Activated CD8-positive, alpha-beta T cell treated with anti-CD3 and anti-CD28 coated beads, Interleukin-2, amount 10 ng/mL, durations not matched to agents 7 days and 5 days (primary cell): ENCODE measurements at regions of chr1 and their contacts with region 1.

Region 1: GRCh38 chr1:40951943-40952743 is 27.4 kb upstream of the CTPS1 start:
- DNase-seq: peak; percentile 68
- ATAC-seq: peak; percentile 85
- H3K4me3 Mint-ChIP-seq: no peak overlapping the region
- H3K27ac Mint-ChIP-seq: peak overlapping the region; percentile 55
- H3K4me1 Mint-ChIP-seq: peaks cover 27% of the 10 kb centered on the region
- H3K27me3 Mint-ChIP-seq: peaks cover 31% of the 10 kb centered on the region

Region 2: DNA sequence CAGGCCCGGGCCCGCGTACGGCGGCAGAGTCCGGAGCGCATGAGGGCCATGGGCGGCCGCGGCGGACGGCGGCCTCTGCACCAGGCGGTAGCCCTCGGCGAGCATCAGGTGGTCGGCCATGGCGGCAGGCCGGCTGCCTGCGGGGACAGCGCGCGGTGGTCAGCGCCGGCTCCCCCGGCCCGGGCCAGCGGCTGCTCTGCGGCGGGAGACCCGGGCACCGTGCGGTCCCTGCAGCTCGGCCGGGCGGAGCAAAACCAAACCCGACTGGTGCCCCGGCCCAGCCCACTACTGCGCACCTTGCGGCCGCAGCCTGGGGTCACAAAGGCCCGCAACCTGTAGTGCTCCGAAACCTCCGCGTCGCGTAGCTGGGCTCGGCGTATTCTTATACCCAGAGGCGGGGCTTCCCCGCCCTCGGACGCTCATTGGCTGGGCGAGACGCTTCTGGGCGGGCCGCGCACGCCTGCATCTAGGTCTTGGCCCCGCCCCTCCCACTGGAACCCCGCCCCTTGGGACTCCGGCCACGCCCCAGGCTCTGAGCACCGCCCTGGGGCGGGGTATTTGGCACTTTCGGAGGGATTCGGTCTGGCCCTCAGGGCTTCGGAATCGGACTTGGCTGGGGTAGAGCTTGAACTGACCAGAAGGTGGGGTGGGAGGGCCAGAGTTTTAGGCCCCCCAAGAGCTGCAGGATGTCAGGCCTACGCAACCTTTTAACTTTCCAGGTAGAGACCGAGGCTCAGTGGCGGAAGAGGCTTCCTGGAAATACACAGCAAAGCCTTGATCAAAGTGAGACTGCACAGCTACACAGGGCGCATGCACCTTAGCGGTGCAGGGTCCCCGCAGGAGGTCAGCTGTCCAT is 89.9 kb before region 1 on chr1 and contains the start of gene CITED4:
- CTCF ChIA-PET with region 1: interaction called, 130 read pairs
- POLR2A ChIA-PET with region 1: interaction called, 9 read pairs
- DNase-seq: peak; percentile 97
- ATAC-seq: peak; percentile 93
- H3K4me3 Mint-ChIP-seq: peak within 1 kb of the TSS; percentile 79
- H3K27ac Mint-ChIP-seq: peak within 1 kb of the TSS; percentile 96
- H3K4me1 Mint-ChIP-seq: peaks cover 30% of the 10 kb centered on the region
- H3K27me3 Mint-ChIP-seq: peaks cover 21% of the 10 kb centered on the region
- total RNA-seq, gene CITED4: 9.1 to 10.0 TPM

Region 3: DNA sequence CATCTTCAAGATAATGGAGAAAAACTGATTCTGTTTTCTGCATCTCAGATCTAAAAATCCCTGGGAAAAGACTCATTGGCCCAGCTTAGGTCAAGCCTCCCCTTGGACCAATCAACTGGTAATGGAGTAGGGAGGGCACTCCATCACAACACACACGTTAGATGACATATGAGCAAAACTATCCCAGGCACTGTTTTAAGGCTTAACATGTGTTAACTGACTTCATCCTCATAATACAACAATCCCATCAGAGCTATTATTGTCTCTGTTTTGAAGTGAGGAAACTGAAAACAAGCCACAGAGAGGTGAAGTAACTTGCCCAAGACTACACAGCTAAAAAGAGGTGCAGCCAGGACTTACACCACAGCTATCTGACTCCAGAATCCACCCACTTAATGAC is 75.3 kb before region 1 on chr1:
- CTCF ChIA-PET with region 1: interaction called, 40 read pairs
- POLR2A ChIA-PET with region 1: no interaction called
- DNase-seq: no peak
- ATAC-seq: no peak
- H3K4me3 Mint-ChIP-seq: no peak overlapping the region
- H3K27ac Mint-ChIP-seq: peak overlapping the region; percentile 43
- H3K4me1 Mint-ChIP-seq: peaks cover 45% of the 10 kb centered on the region
- H3K27me3 Mint-ChIP-seq: no peaks in the 10 kb centered on the region

Region 4: DNA sequence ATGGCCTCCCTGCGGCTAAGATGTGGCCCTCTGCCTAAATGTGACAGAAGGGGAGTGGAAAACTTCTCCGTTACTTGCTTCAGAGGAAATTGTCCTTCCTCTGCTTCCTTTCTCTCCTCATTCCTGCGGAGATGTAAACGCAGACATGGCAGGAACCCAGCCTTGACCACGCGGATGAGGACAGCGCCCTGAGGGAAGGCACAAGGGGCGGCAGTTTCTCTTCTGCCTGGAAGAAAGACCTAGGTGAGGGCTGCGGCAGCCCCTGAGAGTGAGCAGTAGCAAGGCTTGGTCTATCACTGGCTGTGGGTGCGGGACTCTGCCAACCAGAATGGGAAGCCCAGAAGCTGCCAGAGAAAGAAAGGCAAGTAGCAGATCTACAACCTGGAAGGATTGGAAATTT is 13.4 kb after region 1 on chr1:
- CTCF ChIA-PET with region 1: interaction called, 18 read pairs
- POLR2A ChIA-PET with region 1: no interaction called
- DNase-seq: no peak
- ATAC-seq: no peak
- H3K4me3 Mint-ChIP-seq: no peak overlapping the region
- H3K27ac Mint-ChIP-seq: no peak overlapping the region
- H3K4me1 Mint-ChIP-seq: no peaks in the 10 kb centered on the region
- H3K27me3 Mint-ChIP-seq: peaks cover 3% of the 10 kb centered on the region

Region 5: DNA sequence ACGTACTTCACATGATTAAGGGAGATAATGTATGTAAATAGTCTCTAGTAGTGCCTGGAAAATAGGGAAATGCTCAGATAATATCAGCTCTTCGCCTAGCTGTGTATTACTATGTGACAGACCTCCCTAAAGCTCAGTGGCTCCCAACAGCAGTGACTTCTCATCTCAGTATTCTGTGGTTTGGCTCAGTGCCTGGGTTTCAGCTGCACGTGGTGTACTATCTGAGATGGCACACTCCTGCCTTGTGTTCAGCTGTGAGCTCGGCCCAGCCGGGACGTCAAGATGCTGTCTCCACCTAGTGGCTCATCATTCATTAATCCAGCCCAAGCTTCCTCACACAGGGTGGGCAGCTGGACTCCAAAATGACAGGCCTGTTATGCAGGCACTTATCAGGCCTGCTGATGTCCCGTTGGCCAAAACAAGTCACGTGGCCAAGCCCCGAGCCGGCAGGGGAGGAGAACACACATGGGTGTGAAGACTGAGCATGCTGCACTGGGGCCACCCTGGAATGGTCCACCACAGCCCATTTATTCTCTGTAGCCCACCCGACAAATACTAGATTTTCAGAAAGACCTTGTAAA is 51.6 kb after region 1 on chr1:
- CTCF ChIA-PET with region 1: interaction called, 11 read pairs
- POLR2A ChIA-PET with region 1: no interaction called
- DNase-seq: peak; percentile 90
- ATAC-seq: peak; percentile 98
- H3K4me3 Mint-ChIP-seq: no peak overlapping the region
- H3K27ac Mint-ChIP-seq: peak overlapping the region; percentile 82
- H3K4me1 Mint-ChIP-seq: peaks cover 27% of the 10 kb centered on the region
- H3K27me3 Mint-ChIP-seq: no peaks in the 10 kb centered on the region